Spleen (tissue), 13 donors: ENCODE measurements at regions of chr1 and their contacts with region 1.

Region 1: DNA sequence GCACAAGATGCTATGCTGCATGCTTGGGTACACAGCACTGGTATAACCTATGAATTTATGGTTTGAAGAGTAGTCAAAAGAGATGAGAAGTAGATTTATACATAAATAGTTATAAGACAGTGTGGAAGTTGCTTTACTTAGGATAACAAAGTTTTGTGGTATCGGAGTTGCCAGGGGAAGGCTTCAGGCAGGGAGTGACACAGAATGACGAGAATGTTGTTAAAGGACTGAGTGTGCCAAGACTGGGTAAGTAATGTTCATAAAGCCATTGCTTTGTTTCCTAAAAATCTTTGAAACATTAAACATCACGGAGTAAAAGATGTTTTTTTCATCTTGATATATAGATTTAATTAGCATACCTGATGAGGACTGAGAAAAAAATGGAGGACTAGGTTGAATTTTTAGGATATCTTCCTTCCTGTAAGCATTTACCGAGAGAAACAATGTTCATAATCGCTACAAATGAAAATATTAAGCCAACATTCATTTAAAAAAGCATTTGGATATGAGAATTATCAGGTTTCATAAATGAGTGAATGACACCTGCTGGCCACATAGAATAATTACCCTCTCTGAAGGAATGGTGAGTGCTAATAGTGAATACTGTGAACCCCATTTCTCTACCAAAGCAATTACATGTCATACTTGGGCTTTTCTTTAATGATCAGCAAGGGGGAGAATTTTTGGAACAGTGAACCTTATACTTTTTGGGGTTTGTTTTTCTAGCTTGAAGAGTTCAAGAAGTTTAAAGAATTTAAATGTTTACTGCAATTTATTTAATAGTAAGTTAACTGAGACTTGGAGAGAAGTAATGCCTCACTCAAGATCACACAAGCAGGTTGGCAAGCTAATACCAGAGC is 28.4 kb downstream of the EXTL2 start:
- DNase-seq: no peak
- H3K4me3 ChIP-seq: no peak overlapping the region
- H3K27ac ChIP-seq: peak overlapping the region in 4 of 8 donors; percentile 11 to 49 (median 30)
- H3K4me1 ChIP-seq: peaks cover 0 to 21% (median 2%) of the 10 kb centered on the region in 6 donors
- H3K27me3 ChIP-seq: no peaks in the 10 kb centered on the region
- CTCF ChIP-seq: peak; percentile 48 to 77 (median 63)
- POLR2A ChIP-seq: no peak

Region 2: GRCh38 chr1:99808391-99809115 is 1057.7 kb before region 1 on chr1:
- intact Hi-C with region 1: loop called (anchors 5 kb)
- DNase-seq: no peak
- H3K4me3 ChIP-seq: no peak overlapping the region
- H3K27ac ChIP-seq: peak overlapping the region in 1 of 8 donors; percentile 34
- H3K4me1 ChIP-seq: peaks cover 0 to 14% (median 9%) of the 10 kb centered on the region in 6 donors
- H3K27me3 ChIP-seq: peaks cover 0 to 8% (median 0%) of the 10 kb centered on the region in 7 donors
- CTCF ChIP-seq: peak; percentile 43 to 84 (median 69)
- POLR2A ChIP-seq: no peak

Region 3: DNA sequence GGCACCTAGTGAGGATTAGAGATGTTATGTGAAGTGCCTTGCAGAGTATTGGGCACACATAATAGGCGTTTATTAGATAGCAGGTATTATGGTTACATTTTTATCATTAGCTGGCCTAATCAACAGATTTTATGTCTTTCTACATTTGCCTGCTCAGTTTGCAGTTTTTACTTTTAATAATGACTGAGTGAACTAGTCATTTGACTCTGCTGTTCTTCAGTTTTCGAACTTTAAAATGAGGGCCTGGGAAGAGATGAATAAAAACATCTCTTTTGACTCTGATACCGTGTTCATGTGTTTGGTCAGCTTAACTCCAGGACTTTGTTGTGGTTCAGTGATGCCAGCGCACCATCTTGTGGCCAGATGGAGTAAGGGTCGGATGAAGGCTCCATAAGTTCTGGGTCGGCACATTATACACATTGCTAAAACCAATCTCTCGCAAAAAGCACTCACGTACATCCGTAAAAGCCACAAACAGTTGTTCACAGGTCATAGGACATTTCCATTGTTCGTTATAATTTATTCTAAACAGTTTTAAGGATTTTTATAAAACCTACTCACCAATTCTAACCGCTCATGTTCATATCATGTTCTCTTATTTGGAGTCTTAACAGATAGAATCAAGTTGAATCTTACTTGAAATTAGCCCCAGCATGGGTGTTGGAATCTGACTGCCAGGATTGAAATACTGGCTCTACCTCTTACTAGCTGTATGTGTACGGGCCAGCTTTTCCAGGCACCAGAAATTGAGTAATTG is 406.7 kb before region 1 on chr1:
- intact Hi-C with region 1: loop called (anchors 2 kb)
- DNase-seq: peak; percentile 86
- H3K4me3 ChIP-seq: no peak overlapping the region
- H3K27ac ChIP-seq: peak overlapping the region in 3 of 8 donors; percentile 3 to 14 (median 9)
- H3K4me1 ChIP-seq: peaks cover 10 to 43% (median 24%) of the 10 kb centered on the region in 6 donors
- H3K27me3 ChIP-seq: no peaks in the 10 kb centered on the region
- CTCF ChIP-seq: peak; percentile 69 to 89 (median 85)
- POLR2A ChIP-seq: no peak

Region 4: DNA sequence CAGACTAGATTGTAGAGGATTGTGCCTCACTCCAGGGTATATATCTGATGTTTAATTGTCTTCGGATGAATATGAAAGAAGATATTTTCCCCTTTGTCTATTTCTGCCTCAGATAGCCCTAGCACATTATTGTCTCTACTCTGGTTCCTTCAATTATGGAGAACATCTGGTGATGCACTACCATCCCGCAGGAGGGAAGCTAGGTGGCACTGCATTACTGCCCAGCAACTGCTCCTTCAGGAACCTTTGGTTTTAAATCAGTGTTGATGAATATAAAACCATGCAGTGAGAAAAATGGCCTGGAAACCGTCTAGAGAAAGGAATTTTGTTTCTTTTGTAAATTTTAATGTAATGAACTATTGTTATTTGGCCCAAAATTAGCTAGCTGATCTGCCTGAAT is 259.8 kb before region 1 on chr1:
- intact Hi-C with region 1: loop called (anchors 5 kb)
- DNase-seq: no peak
- H3K4me3 ChIP-seq: no peak overlapping the region
- H3K27ac ChIP-seq: peak overlapping the region in 4 of 8 donors; percentile 1 to 28 (median 11)
- H3K4me1 ChIP-seq: peaks cover 0 to 20% (median 3%) of the 10 kb centered on the region in 6 donors
- H3K27me3 ChIP-seq: no peaks in the 10 kb centered on the region
- CTCF ChIP-seq: peak in 10 of 11 experiments; percentile 21 to 75 (median 64)
- POLR2A ChIP-seq: no peak

Region 5: GRCh38 chr1:100989306-100990077 is 123.2 kb after region 1 on chr1:
- intact Hi-C with region 1: no loop called
- DNase-seq: no peak
- H3K4me3 ChIP-seq: no peak overlapping the region
- H3K27ac ChIP-seq: peak overlapping the region in 3 of 8 donors; percentile 12 to 33 (median 23)
- H3K4me1 ChIP-seq: no peaks in the 10 kb centered on the region
- H3K27me3 ChIP-seq: no peaks in the 10 kb centered on the region
- CTCF ChIP-seq: no peak
- POLR2A ChIP-seq: no peak